Natural killer cell (primary cell): ENCODE measurements at regions of chr3 and their contacts with region 1.

Region 1: GRCh38 chr3:134212906-134213665 is 37.6 kb downstream of the RYK start:
- DNase-seq: peak; percentile 83 to 89
- ATAC-seq: peak; percentile 72 to 82 (median 77)
- H3K4me3 ChIP-seq: no peak overlapping the region
- H3K4me3 Mint-ChIP-seq: no peak overlapping the region
- H3K27ac ChIP-seq: no peak overlapping the region
- H3K27ac Mint-ChIP-seq: no peak overlapping the region
- H3K4me1 ChIP-seq: peaks cover 7% of the 10 kb centered on the region
- H3K4me1 Mint-ChIP-seq: peaks cover 37 to 44% of the 10 kb centered on the region in 2 donors
- H3K27me3 ChIP-seq: no peaks in the 10 kb centered on the region
- H3K27me3 Mint-ChIP-seq: no peaks in the 10 kb centered on the region
- CTCF ChIP-seq: peak; percentile 92

Region 2: DNA sequence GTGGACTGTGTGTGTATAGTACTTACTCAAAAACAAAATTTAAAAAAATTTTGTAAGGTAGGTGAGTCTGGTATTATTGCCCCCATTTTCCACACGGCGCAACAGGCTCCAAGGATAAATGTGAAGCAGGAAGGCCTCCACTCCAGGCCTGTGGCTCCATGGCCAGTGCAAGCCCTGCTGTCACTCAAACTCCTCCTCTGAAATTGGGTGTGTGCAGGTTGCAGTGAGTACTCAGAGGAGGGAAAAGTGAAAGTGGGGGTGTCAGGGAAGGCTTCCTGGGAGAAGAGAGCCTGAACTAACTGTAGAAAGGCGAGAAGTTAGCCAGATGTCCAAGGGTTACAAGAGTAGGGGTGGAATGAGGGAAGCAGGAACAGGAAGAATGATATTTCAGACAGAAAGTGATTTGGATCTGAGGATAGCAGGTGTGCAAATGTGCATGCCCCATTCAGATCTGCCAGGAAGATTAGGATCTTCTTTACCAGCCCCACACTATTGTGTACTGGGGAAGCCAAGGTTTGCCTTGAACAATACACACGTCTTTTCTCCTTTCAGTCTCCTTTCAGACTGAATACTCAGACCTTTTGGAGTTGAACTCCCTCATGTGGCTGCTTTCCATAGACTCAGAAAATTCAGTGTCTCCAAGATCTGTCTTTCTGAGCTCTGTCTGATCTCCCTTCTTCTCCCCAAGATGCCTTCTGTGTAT is 86.2 kb after region 1 on chr3:
- intact Hi-C with region 1: loop called (anchors 5 kb)
- DNase-seq: peak in 1 of 2 donors; percentile 13
- ATAC-seq: no peak
- H3K4me3 ChIP-seq: no peak overlapping the region
- H3K4me3 Mint-ChIP-seq: no peak overlapping the region
- H3K27ac ChIP-seq: no peak overlapping the region
- H3K27ac Mint-ChIP-seq: no peak overlapping the region
- H3K4me1 ChIP-seq: peaks cover 6% of the 10 kb centered on the region
- H3K4me1 Mint-ChIP-seq: peaks cover 0 to 5% of the 10 kb centered on the region in 2 donors
- H3K27me3 ChIP-seq: peaks cover 7% of the 10 kb centered on the region
- H3K27me3 Mint-ChIP-seq: peaks cover 22 to 29% of the 10 kb centered on the region in 2 donors
- CTCF ChIP-seq: no peak

Region 3: GRCh38 chr3:134378384-134378783 is 165.3 kb after region 1 on chr3:
- intact Hi-C with region 1: loop called (anchors 5 kb)
- DNase-seq: peak in 1 of 2 donors; percentile 65
- ATAC-seq: peak in 1 of 3 donors; percentile 60
- H3K4me3 ChIP-seq: no peak overlapping the region
- H3K4me3 Mint-ChIP-seq: no peak overlapping the region
- H3K27ac ChIP-seq: no peak overlapping the region
- H3K27ac Mint-ChIP-seq: no peak overlapping the region
- H3K4me1 ChIP-seq: peaks cover 16% of the 10 kb centered on the region
- H3K4me1 Mint-ChIP-seq: peaks cover 0 to 12% of the 10 kb centered on the region in 2 donors
- H3K27me3 ChIP-seq: peaks cover 6% of the 10 kb centered on the region
- H3K27me3 Mint-ChIP-seq: peaks cover 44 to 49% of the 10 kb centered on the region in 2 donors
- CTCF ChIP-seq: peak; percentile 16

Region 4: GRCh38 chr3:134453631-134454030 is 240.5 kb after region 1 on chr3:
- intact Hi-C with region 1: loop called (anchors 1 kb)
- DNase-seq: no peak
- ATAC-seq: no peak
- H3K4me3 ChIP-seq: no peak overlapping the region
- H3K4me3 Mint-ChIP-seq: no peak overlapping the region
- H3K27ac ChIP-seq: no peak overlapping the region
- H3K27ac Mint-ChIP-seq: no peak overlapping the region
- H3K4me1 ChIP-seq: no peaks in the 10 kb centered on the region
- H3K4me1 Mint-ChIP-seq: no peaks in the 10 kb centered on the region
- H3K27me3 ChIP-seq: no peaks in the 10 kb centered on the region
- H3K27me3 Mint-ChIP-seq: peaks cover 13 to 26% of the 10 kb centered on the region in 2 donors
- CTCF ChIP-seq: no peak

Region 5: DNA sequence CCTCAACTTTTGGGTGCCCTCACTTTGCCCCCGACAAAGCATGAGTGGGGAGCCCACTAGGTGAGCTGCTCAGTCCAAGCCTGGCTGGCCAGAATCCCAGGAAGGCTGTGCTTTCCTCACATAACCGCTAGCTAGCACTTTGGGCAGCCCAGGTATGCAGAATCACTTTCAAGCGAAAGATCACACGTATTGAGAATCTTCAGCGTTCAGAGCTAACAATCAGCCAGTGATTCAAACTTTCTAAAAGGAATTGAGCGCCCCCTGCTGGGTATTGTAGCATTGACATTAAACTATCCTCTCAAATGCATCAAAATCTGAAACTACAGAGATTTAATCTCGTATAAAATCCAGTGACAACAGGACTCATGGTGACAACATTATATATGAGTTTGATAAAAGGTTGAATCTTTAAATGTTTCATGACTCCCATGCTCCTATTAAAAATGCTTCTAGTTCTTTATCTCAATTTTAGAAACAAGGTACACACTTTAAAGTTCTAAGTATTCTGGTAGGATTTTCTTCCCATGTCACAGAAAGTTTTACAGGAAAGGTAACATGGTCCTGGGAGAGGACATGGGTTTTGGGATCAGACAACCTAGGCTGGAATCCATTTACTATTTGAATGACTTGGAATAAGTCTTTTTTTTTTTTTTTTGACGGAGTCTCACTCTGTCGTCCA is 260.9 kb after region 1 on chr3:
- intact Hi-C with region 1: loop called (anchors 1 kb)
- DNase-seq: peak; percentile 63 to 86
- ATAC-seq: peak; percentile 76 to 82 (median 77)
- H3K4me3 ChIP-seq: no peak overlapping the region
- H3K4me3 Mint-ChIP-seq: no peak overlapping the region
- H3K27ac ChIP-seq: no peak overlapping the region
- H3K27ac Mint-ChIP-seq: no peak overlapping the region
- H3K4me1 ChIP-seq: no peaks in the 10 kb centered on the region
- H3K4me1 Mint-ChIP-seq: no peaks in the 10 kb centered on the region
- H3K27me3 ChIP-seq: no peaks in the 10 kb centered on the region
- H3K27me3 Mint-ChIP-seq: no peaks in the 10 kb centered on the region
- CTCF ChIP-seq: peak; percentile 80

Region 6: DNA sequence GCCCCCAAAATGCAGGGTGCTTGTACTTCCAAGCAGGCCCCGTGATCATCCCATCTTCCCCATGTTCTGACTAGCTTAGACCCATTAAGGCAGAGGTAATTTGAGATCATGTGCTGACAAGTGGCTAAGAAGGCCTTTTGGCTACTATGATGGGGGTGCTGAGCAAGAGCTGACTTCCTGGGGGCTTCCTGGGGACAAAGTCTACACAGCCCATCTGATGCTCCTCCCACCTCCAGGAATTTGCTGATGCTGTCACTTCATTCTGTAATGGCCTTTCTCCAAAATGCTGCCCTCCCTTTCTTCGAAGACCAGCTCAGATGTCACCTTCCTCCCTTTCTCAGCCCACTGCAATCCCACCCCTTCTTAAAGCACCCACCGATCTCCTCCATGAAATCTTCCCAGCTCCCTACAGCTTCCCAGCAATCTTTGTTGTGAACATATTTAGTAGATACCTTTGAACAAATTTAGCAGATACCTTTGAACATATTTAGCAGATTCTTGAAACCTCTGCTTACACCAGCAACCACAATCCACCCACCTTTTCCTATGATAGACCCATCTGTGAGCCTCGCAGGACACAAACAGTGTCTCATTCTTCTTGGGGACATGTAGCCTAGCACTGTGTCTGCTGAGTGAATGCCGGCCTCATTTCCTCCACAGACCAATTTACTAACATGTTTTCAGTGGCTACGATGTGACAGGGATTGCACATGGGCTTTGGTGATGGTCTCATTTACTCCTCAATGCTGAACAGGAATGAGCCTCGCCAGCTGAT is 805.2 kb after region 1 on chr3:
- intact Hi-C with region 1: no loop called
- DNase-seq: no peak
- ATAC-seq: no peak
- H3K4me3 ChIP-seq: no peak overlapping the region
- H3K4me3 Mint-ChIP-seq: no peak overlapping the region
- H3K27ac ChIP-seq: no peak overlapping the region
- H3K27ac Mint-ChIP-seq: no peak overlapping the region
- H3K4me1 ChIP-seq: no peaks in the 10 kb centered on the region
- H3K4me1 Mint-ChIP-seq: no peaks in the 10 kb centered on the region
- H3K27me3 ChIP-seq: no peaks in the 10 kb centered on the region
- H3K27me3 Mint-ChIP-seq: peaks cover under 1 to 3% of the 10 kb centered on the region in 2 donors
- CTCF ChIP-seq: no peak